CD4-positive, alpha-beta T cell (primary cell): ENCODE measurements at regions of chr17 and their contacts with region 1.

Region 1: GRCh38 chr17:74368092-74369081 is 1.1 kb downstream of the GPR142 start:
- DNase-seq: peak; percentile 48 to 87 (median 70)
- ATAC-seq: peak; percentile 65
- H3K4me3 ChIP-seq: peak overlapping the region; percentile 30
- H3K4me3 Mint-ChIP-seq: no peak overlapping the region
- H3K27ac ChIP-seq: no peak overlapping the region
- H3K27ac Mint-ChIP-seq: no peak overlapping the region
- H3K4me1 ChIP-seq: peaks cover 19% of the 10 kb centered on the region
- H3K4me1 Mint-ChIP-seq: peaks cover 14% of the 10 kb centered on the region
- H3K27me3 ChIP-seq: no peaks in the 10 kb centered on the region
- H3K27me3 Mint-ChIP-seq: peaks cover 7% of the 10 kb centered on the region
- CTCF ChIP-seq: peak; percentile 91

Region 2: DNA sequence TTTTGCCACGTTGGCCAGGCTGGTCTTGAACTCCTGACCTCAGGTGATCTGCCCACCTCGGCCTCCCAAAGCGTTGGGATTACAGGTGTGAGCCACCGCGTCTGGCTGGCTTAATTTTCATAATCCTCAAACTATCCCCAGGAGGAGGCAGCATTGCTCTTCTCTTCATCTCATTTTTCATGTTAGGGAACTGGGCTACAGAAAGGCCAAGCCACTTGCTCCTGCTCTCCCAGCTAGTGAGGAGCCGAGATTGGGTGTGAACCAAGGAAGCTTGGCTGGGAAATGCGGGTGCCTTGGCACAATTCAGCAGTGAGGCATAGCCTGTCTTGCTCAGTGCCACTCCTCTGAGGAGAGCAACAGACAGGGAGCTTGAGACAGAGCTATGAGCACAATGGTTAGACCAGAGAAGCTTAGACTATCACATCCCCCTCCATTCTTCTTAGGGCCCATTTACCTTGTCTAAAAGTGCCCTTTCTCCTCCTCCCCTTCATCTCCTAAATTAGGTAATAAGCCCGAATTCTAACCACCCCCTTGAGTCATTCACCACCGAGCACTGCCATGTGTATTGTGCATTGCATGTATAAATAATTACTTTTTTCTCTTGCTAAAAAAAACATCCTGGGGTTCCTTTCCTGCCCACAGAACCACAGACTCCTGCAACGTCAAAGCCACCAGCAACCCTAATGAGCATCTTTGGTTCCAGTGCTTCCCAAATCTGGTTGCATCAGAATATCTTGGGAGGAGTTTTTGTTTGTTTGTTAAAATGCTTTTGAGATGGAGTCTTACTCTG is 62.3 kb before region 1 on chr17:
- CTCF ChIA-PET with region 1: interaction called, 3 read pairs
- POLR2A ChIA-PET with region 1: no interaction called
- intact Hi-C with region 1: loop called in 1 of 2 experiments (anchors 5 kb)
- DNase-seq: no peak
- ATAC-seq: no peak
- H3K4me3 ChIP-seq: no peak overlapping the region
- H3K4me3 Mint-ChIP-seq: no peak overlapping the region
- H3K27ac ChIP-seq: no peak overlapping the region
- H3K27ac Mint-ChIP-seq: no peak overlapping the region
- H3K4me1 ChIP-seq: peaks cover 10% of the 10 kb centered on the region
- H3K4me1 Mint-ChIP-seq: peaks cover 6% of the 10 kb centered on the region
- H3K27me3 ChIP-seq: no peaks in the 10 kb centered on the region
- H3K27me3 Mint-ChIP-seq: no peaks in the 10 kb centered on the region
- CTCF ChIP-seq: no peak

Region 3: GRCh38 chr17:74457146-74457819 is 88.9 kb after region 1 on chr17:
- CTCF ChIA-PET with region 1: interaction called, 10 read pairs
- POLR2A ChIA-PET with region 1: no interaction called
- intact Hi-C with region 1: loop called in 1 of 2 experiments (anchors 2 kb)
- DNase-seq: peak; percentile 45 to 86 (median 67)
- ATAC-seq: peak; percentile 60
- H3K4me3 ChIP-seq: no peak overlapping the region
- H3K4me3 Mint-ChIP-seq: peak overlapping the region; percentile 51
- H3K27ac ChIP-seq: no peak overlapping the region
- H3K27ac Mint-ChIP-seq: no peak overlapping the region
- H3K4me1 ChIP-seq: peaks cover 68% of the 10 kb centered on the region
- H3K4me1 Mint-ChIP-seq: peaks cover 27% of the 10 kb centered on the region
- H3K27me3 ChIP-seq: peaks cover 0 to 3% of the 10 kb centered on the region in 2 experiments
- H3K27me3 Mint-ChIP-seq: peaks cover 6% of the 10 kb centered on the region
- CTCF ChIP-seq: peak; percentile 83

Region 4: GRCh38 chr17:74528491-74529199 is 160.3 kb after region 1 on chr17:
- CTCF ChIA-PET with region 1: no interaction called
- POLR2A ChIA-PET with region 1: no interaction called
- intact Hi-C with region 1: loop called (anchors 2 kb)
- DNase-seq: peak in 3 of 14 experiments; percentile 32 to 76 (median 67)
- ATAC-seq: no peak
- H3K4me3 ChIP-seq: no peak overlapping the region
- H3K4me3 Mint-ChIP-seq: no peak overlapping the region
- H3K27ac ChIP-seq: no peak overlapping the region
- H3K27ac Mint-ChIP-seq: no peak overlapping the region
- H3K4me1 ChIP-seq: no peaks in the 10 kb centered on the region
- H3K4me1 Mint-ChIP-seq: peaks cover 5% of the 10 kb centered on the region
- H3K27me3 ChIP-seq: peaks cover 11 to 15% of the 10 kb centered on the region in 2 experiments
- H3K27me3 Mint-ChIP-seq: peaks cover 46% of the 10 kb centered on the region
- CTCF ChIP-seq: no peak